ENCODE measurements at regions of chr20 and their contacts with region 1.

Region 1: DNA sequence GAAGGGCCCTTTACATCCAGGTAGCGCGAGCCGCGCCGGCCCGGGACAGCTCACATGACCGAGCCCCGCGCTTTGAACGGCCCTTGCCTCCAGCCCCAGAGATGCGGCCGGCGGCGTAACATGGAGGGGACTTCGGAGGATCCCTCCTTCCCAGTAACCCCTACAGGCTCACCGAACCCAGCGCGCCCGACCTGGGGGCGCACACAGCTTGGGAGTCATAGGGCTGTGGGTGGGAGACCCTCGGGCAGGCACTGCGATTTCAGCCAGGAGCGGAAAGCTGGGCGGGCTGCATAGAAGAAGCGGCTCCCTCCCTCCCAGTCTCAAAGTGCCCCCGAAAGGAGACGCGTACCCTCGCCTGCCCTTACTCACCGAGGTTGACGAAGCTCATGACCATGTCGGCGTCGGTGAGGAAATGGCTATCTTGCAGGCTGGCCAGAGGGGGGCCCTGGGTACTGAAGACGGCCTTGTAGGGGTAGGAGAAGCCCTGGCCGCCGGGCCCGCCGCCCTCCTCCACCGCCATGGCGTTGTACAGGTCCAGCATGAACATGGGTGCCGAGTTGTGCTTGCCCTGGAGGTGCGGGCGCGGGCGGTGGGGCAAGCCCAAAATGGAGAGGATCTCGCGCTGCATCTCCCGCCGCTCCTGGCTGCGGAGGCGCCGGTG is 975 bp downstream of the BMP7 start:
- DNase-seq: no peak
- H3K4me3 Mint-ChIP-seq: no peak overlapping the region
- H3K27ac Mint-ChIP-seq: no peak overlapping the region
- H3K4me1 Mint-ChIP-seq: no peaks in the 10 kb centered on the region
- H3K27me3 Mint-ChIP-seq: peaks cover 71% of the 10 kb centered on the region

Region 2: DNA sequence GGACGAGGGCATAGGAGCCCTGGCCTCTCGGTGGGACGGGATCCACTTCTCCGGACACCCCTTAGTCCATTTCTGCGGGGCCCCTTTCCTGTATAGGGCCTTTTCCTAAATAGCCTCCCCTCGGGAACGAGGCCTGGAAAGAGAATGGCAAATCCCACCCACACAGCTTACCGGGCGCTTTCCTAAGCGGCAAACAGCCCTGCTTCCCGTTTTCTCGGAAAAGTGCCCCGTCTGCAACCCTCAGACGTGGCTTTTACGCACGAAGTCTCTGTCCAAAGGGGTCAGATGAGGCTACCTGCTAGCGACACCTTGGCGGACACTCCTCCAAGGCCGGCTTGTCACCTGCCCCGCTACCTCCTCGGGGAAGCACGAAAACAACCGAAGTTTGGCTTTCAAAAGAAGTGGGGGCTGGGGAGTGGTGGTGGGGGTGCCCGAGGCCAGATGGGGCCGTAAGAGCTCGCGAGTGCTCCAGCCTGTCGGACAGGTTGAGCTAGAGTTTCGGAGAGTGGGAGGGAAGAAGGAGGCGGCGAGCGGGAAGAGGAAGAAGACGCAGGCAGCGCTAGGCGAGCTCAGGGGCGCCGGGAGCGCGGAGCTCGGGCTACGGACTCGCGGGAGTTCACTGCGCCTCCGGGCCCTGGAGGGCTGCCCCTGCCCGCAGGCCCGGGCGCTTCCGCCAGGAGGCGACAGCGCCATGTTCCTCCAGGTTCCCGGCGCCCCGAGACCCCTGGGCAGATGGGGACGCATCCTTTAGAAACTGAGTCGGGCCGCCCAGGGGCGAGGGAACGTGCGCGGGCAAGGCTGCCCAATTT is 635.6 kb before region 1 on chr20:
- intact Hi-C with region 1: loop called (anchors 5 kb)
- DNase-seq: peak; percentile 59
- H3K4me3 Mint-ChIP-seq: peak overlapping the region; percentile 32
- H3K27ac Mint-ChIP-seq: no peak overlapping the region
- H3K4me1 Mint-ChIP-seq: peaks cover 6% of the 10 kb centered on the region
- H3K27me3 Mint-ChIP-seq: peaks cover 71% of the 10 kb centered on the region

Region 3: DNA sequence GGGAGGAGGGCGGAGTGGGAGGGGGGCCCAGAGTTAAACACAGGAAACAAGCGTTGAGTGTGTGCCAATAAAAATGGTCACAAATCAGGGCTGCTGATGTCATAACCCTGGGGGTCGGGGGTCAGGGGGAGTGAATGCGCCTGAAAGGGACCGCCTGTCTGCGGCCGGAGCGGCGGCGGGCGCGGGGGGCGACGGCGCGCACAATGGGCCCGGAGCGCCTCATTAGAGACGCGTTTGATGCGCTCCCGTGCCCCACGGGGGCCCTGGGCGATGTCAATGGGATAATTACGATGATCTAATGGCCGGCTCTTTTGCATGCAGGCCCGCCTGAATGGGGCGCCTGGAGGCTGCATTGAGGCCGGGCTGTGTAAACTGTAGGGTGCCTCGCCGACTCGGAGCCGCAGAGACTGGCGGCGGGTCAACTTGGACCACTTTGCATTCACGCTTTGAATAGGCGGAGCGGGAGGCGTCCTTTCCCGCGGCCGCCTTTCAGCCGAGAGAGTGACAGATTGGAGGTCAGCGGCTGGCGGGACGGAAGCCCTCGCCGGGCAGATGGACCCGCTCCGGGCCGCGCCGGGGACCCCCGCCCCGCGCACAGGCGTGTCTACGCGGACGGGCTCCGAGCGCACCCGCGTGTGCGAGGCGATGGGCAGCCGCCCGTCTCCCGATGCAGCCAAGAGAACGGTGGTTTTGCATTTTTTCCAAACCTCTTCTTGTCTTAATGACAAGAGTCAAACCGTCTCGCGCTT is 340.2 kb before region 1 on chr20:
- intact Hi-C with region 1: loop called (anchors 2 kb)
- DNase-seq: peak; percentile 55
- H3K4me3 Mint-ChIP-seq: no peak overlapping the region
- H3K27ac Mint-ChIP-seq: no peak overlapping the region
- H3K4me1 Mint-ChIP-seq: no peaks in the 10 kb centered on the region
- H3K27me3 Mint-ChIP-seq: peaks cover 64% of the 10 kb centered on the region

Region 4: DNA sequence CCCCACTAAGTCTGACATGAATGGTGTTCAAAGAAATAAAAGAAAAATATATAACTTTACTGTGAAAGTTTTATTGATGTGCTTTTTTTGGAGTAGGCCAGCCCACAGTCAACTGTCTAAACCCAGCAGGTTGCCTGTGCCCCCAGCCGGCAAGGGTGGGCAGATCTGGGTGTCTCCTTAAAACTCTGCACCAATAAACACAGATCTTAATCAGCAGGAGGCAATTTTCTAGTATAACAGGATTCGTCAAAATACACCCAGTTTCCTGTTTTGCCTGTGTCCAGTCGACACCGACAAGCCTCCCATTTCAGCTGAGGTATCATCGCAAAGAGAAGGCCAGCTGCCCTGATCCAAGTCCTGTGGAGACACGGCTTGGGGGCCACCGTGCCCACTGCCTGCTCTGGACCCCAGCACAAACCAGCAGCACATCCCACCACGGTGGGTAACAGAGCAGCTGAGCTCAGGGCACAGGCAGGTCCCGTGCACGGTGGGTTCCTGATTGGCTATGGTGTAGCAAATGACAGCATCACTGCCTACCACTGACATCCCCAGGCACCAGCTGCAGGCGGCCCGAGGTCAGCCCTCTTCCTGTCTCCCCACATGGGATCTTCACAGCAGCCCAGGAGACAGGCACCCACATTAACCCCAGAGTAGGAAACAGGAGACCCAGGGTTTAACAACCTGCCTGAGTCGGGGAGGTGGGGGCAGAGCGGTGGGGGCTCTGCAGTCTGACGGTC is 14.7 kb before region 1 on chr20:
- intact Hi-C with region 1: loop called (anchors 2 kb)
- DNase-seq: peak; percentile 61
- H3K4me3 Mint-ChIP-seq: no peak overlapping the region
- H3K27ac Mint-ChIP-seq: no peak overlapping the region
- H3K4me1 Mint-ChIP-seq: peaks cover 7% of the 10 kb centered on the region
- H3K27me3 Mint-ChIP-seq: peaks cover 2% of the 10 kb centered on the region

Region 5: GRCh38 chr20:57374931-57375651 is 109.6 kb after region 1 on chr20:
- intact Hi-C with region 1: no loop called
- DNase-seq: no peak
- H3K4me3 Mint-ChIP-seq: no peak overlapping the region
- H3K27ac Mint-ChIP-seq: peak overlapping the region; percentile 24
- H3K4me1 Mint-ChIP-seq: peaks cover 6% of the 10 kb centered on the region
- H3K27me3 Mint-ChIP-seq: no peaks in the 10 kb centered on the region